Activated T-helper 2 cell treated with anti-CD3 and anti-CD28 coated beads, Interferon-gamma antibody, Interleukin-2, Interleukin-4, amounts not matched to agents 10 μg/mL and 5 μg/mL and 100 μg/mL, durations not matched to agents 14 hours and 24 hours and 36 hours (primary cell): ENCODE measurements at regions of chr17 and their contacts with region 1.

Region 1: GRCh38 chr17:73429440-73430164 is 117.8 kb upstream of the CDC42EP4 start:
- DNase-seq: peak; percentile 71
- H3K4me3 Mint-ChIP-seq: no peak overlapping the region
- H3K27ac Mint-ChIP-seq: no peak overlapping the region
- H3K4me1 Mint-ChIP-seq: peaks cover 4% of the 10 kb centered on the region
- H3K27me3 Mint-ChIP-seq: peaks cover 4% of the 10 kb centered on the region

Region 2: GRCh38 chr17:73414171-73414955 is 15.2 kb before region 1 on chr17:
- intact Hi-C with region 1: no loop called
- DNase-seq: no peak
- H3K4me3 Mint-ChIP-seq: no peak overlapping the region
- H3K27ac Mint-ChIP-seq: no peak overlapping the region
- H3K4me1 Mint-ChIP-seq: no peaks in the 10 kb centered on the region
- H3K27me3 Mint-ChIP-seq: no peaks in the 10 kb centered on the region

Region 3: DNA sequence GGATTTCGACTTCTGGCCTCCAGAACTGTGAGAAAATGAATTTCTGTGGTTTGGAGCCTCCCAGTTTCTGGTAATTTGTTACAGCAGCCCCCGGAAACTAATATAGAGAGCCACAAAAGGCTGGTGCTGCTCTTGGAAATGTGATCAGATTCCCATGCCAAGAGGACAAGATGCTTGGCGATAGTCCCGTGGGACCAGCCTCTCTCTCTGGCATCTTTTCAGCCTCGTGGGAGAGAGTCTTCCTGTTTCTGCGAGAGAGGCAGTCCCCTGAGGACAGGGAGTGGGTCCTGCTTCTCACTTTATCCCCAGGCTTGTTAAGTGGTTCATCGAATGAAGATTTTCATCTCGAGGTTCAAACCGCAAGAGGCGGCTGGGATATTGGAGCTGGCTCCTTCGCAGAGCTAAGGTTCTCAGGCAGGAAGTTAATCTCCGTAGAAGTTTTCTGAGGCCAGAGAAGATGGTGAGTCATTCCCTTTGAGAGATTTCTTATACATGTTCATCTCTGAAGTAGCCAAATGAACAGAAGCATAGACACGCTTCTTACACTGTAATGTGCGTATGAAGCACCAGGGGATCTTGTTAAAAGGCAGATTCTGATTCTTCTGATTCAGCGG is 426.2 kb after region 1 on chr17:
- intact Hi-C with region 1: no loop called
- DNase-seq: no peak
- H3K4me3 Mint-ChIP-seq: no peak overlapping the region
- H3K27ac Mint-ChIP-seq: no peak overlapping the region
- H3K4me1 Mint-ChIP-seq: no peaks in the 10 kb centered on the region
- H3K27me3 Mint-ChIP-seq: no peaks in the 10 kb centered on the region

Region 4: GRCh38 chr17:74176546-74177001 is 747.0 kb after region 1 on chr17:
- intact Hi-C with region 1: loop called (anchors 5 kb)
- DNase-seq: peak; percentile 24
- H3K4me3 Mint-ChIP-seq: no peak overlapping the region
- H3K27ac Mint-ChIP-seq: no peak overlapping the region
- H3K4me1 Mint-ChIP-seq: no peaks in the 10 kb centered on the region
- H3K27me3 Mint-ChIP-seq: peaks cover 25% of the 10 kb centered on the region